ENCODE measurements at regions of chr22 and their contacts with region 1.

Region 1: GRCh38 chr22:36470162-36470993 is 11.1 kb downstream of the TXN2 start:
- DNase-seq: peak; percentile 78
- H3K4me3 ChIP-seq: no peak overlapping the region
- H3K27ac ChIP-seq: peak overlapping the region; percentile 92
- H3K4me1 ChIP-seq: peaks cover 66% of the 10 kb centered on the region
- H3K27me3 ChIP-seq: no peaks in the 10 kb centered on the region
- CTCF ChIP-seq: peak; percentile 99

Region 2: DNA sequence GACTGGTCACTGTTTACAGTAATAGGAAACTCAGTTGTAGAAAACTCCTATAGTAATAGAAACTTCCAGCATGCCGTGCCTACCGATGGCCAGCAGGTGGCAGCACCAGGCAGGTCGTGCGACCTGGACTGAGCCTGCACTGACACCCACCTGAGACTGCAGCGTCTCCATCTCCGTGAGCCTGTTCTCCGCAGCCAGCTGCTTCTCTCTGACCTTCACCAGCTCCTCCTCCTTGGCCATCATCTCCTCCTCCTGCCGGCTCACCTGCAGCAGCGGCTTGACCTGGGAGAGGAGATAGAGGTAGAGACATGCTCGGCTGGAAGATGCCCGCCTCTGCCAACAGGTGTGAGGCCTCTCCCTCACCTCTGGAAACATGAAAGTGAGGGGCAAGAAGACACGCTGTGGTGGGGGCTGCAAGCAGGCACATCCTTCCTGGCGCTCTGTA is 169.0 kb before region 1 on chr22:
- intact Hi-C with region 1: loop called (anchors 5 kb)
- DNase-seq: peak; percentile 67
- H3K4me3 ChIP-seq: no peak overlapping the region
- H3K27ac ChIP-seq: peak overlapping the region; percentile 22
- H3K4me1 ChIP-seq: peaks cover 15% of the 10 kb centered on the region
- H3K27me3 ChIP-seq: no peaks in the 10 kb centered on the region
- CTCF ChIP-seq: peak; percentile 96

Region 3: GRCh38 chr22:36323182-36323854 is 147.1 kb before region 1 on chr22:
- intact Hi-C with region 1: loop called (anchors 5 kb)
- DNase-seq: peak; percentile 73
- H3K4me3 ChIP-seq: peak overlapping the region; percentile 31
- H3K27ac ChIP-seq: peak overlapping the region; percentile 100
- H3K4me1 ChIP-seq: peaks cover 89% of the 10 kb centered on the region
- H3K27me3 ChIP-seq: no peaks in the 10 kb centered on the region
- CTCF ChIP-seq: peak; percentile 26

Region 4: GRCh38 chr22:36619797-36620399 is 149.5 kb after region 1 on chr22:
- intact Hi-C with region 1: no loop called
- DNase-seq: no peak
- H3K4me3 ChIP-seq: no peak overlapping the region
- H3K27ac ChIP-seq: no peak overlapping the region
- H3K4me1 ChIP-seq: no peaks in the 10 kb centered on the region
- H3K27me3 ChIP-seq: peaks cover 79% of the 10 kb centered on the region
- CTCF ChIP-seq: no peak